GM13976 (cell line): ENCODE measurements at regions of chr12 and their contacts with region 1.

Region 1: GRCh38 chr12:56521590-56522371 is at the start of gene RBMS2:
- DNase-seq: peak; percentile 60
- CTCF ChIP-seq: no peak

Region 2: DNA sequence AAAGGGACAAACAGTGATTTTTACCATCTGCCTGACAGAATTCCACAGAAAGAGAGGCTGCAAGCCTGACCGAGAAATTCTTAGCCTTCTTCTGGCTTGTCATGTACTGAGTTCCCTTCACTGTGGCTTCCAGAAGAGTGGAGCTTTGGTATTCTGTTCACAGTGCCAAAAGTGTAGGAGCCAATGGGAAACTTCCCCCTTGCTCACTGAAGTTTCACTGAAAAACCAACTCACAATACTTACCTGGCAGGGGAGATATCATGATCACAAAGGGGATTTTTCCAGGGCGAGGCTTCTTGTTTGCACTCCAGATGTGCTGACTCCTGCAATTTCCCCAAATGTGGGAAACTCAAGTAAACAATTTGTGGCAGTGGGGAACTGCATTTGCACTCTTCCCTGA is 647.3 kb before region 1 on chr12:
- in situ Hi-C with region 1: no loop called
- DNase-seq: no peak
- CTCF ChIP-seq: no peak

Region 3: DNA sequence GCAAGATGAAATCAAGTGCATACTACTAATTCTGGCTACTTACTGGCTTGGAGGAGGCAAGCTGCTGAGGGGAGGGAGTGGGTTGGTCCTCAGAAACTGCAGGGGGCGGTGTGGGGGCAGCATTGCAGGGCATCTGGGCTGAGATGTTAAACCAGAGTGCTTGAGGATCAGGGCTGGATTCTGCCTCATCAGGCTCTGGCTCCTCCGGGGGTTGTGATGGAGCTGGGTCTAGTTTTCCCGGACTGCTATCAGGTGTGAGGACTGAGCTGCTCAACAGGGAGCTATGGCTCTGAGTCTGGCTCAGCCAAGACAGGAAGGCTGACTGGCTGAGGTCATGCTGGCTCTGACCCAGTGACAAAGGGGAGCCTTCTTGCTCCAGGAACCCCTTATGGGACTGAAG is 79.7 kb after region 1 on chr12:
- in situ Hi-C with region 1: loop called (anchors 25 kb)
- DNase-seq: peak; percentile 51
- CTCF ChIP-seq: no peak